MCF 10A (cell line): ENCODE measurements at regions of chr13 and their contacts with region 1.

Region 1: DNA sequence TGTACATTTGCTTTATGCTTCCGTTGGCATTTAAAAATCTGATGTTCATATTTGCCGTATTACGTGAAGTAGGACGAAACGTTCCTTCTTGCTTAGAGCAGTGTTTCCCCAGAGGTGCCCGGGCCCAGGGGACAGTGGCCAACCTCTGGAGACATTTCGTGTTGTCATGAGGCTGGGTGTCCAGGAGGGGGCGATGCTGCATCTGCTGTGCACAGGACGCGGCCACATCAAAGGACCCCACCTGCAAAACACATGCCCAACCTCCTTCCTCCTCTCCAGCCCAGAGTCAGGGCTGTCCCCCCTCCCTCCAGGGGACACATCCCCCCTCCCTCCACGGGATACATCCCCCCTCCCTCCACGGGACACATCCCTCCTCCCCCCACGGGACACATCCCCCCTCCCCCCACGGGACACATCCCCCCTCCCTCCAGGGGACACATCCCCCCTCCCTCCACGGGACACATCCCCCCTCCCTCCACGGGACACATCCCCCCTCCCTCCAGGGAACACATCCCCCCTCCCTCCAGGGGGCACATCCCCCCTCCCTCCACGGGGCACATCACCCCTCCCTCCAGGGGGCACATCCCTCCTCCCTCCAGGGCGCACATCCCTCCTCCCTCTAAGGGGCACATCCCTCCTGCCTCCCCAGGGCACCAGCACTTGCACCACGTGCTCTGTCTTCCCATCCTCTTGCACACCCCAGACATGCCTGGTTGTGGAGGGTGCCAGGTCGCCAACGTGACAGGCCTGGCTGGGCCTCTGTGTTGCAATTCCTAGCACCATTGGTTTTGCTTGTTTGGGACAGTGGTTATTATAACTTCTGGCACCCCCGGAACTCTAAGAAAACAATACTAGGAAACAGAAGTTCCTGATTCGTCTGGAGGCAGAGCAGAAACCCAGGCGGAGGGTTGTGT is 46.7 kb downstream of the GAS6 start:
- DNase-seq: peak; percentile 86
- H3K4me3 Mint-ChIP-seq: no peak overlapping the region
- H3K27ac Mint-ChIP-seq: no peak overlapping the region
- H3K4me1 Mint-ChIP-seq: peaks cover 41% of the 10 kb centered on the region
- H3K27me3 Mint-ChIP-seq: no peaks in the 10 kb centered on the region
- CTCF ChIP-seq: peak; percentile 83

Region 2: GRCh38 chr13:113848431-113849260 is 31.4 kb after region 1 on chr13:
- CTCF ChIA-PET with region 1: no interaction called
- POLR2A ChIA-PET with region 1: interaction called, 12 read pairs
- intact Hi-C with region 1: no loop called
- DNase-seq: peak; percentile 86
- H3K4me3 Mint-ChIP-seq: no peak overlapping the region
- H3K27ac Mint-ChIP-seq: no peak overlapping the region
- H3K4me1 Mint-ChIP-seq: peaks cover 20% of the 10 kb centered on the region
- H3K27me3 Mint-ChIP-seq: no peaks in the 10 kb centered on the region
- CTCF ChIP-seq: no peak

Region 3: GRCh38 chr13:113897161-113897560 is 80.0 kb after region 1 on chr13:
- CTCF ChIA-PET with region 1: interaction called, 3 read pairs
- POLR2A ChIA-PET with region 1: no interaction called
- intact Hi-C with region 1: loop called (anchors 2 kb)
- DNase-seq: peak; percentile 79
- H3K4me3 Mint-ChIP-seq: peak overlapping the region; percentile 9
- H3K27ac Mint-ChIP-seq: peak overlapping the region; percentile 58
- H3K4me1 Mint-ChIP-seq: peaks cover 20% of the 10 kb centered on the region
- H3K27me3 Mint-ChIP-seq: no peaks in the 10 kb centered on the region
- CTCF ChIP-seq: no peak

Region 4: GRCh38 chr13:113951246-113951999 is 134.2 kb after region 1 on chr13:
- CTCF ChIA-PET with region 1: interaction called, 12 read pairs
- POLR2A ChIA-PET with region 1: interaction called, 5 read pairs
- intact Hi-C with region 1: no loop called
- DNase-seq: peak; percentile 83
- H3K4me3 Mint-ChIP-seq: no peak overlapping the region
- H3K27ac Mint-ChIP-seq: no peak overlapping the region
- H3K4me1 Mint-ChIP-seq: peaks cover 4% of the 10 kb centered on the region
- H3K27me3 Mint-ChIP-seq: no peaks in the 10 kb centered on the region
- CTCF ChIP-seq: peak; percentile 96